ENCODE measurements at regions of chr13 and their contacts with region 1.

Region 1: GRCh38 chr13:68019901-68020300 is 789.8 kb upstream of the PCDH9 start:
- DNase-seq: no peak
- ATAC-seq: no peak
- H3K4me3 ChIP-seq: no peak overlapping the region
- H3K4me3 Mint-ChIP-seq: no peak overlapping the region
- H3K27ac ChIP-seq: no peak overlapping the region
- H3K27ac Mint-ChIP-seq: no peak overlapping the region
- H3K4me1 ChIP-seq: no peaks in the 10 kb centered on the region
- H3K4me1 Mint-ChIP-seq: no peaks in the 10 kb centered on the region
- H3K27me3 ChIP-seq: no peaks in the 10 kb centered on the region
- H3K27me3 Mint-ChIP-seq: no peaks in the 10 kb centered on the region
- CTCF ChIP-seq: no peak

Region 2: GRCh38 chr13:67946131-67946530 is 73.8 kb before region 1 on chr13:
- CTCF ChIA-PET with region 1: no interaction called
- POLR2A ChIA-PET with region 1: no interaction called
- intact Hi-C with region 1: loop called in 1 of 2 experiments (anchors 2 kb)
- DNase-seq: no peak
- ATAC-seq: no peak
- H3K4me3 ChIP-seq: no peak overlapping the region
- H3K4me3 Mint-ChIP-seq: no peak overlapping the region
- H3K27ac ChIP-seq: no peak overlapping the region
- H3K27ac Mint-ChIP-seq: no peak overlapping the region
- H3K4me1 ChIP-seq: no peaks in the 10 kb centered on the region
- H3K4me1 Mint-ChIP-seq: no peaks in the 10 kb centered on the region
- H3K27me3 ChIP-seq: no peaks in the 10 kb centered on the region
- H3K27me3 Mint-ChIP-seq: no peaks in the 10 kb centered on the region
- CTCF ChIP-seq: no peak

Measured in CD8-positive, alpha-beta T cell (primary cell).